ENCODE measurements at regions of chr18 and their contacts with region 1.

Region 1: GRCh38 chr18:32470713-32471633 is at the start of gene GAREM1:
- DNase-seq: peak; percentile 97
- H3K4me3 ChIP-seq: peak within 1 kb of the TSS; percentile 74 to 92 (median 88)
- H3K27ac ChIP-seq: peak within 1 kb of the TSS; percentile 85 to 95 (median 92)
- H3K4me1 ChIP-seq: peaks cover 14 to 43% (median 35%) of the 10 kb centered on the region in 4 donors
- H3K27me3 ChIP-seq: no peaks in the 10 kb centered on the region
- CTCF ChIP-seq: peak; percentile 86 to 91 (median 90)
- EP300 ChIP-seq: no peak
- POLR2A ChIP-seq: peak; percentile 62
- total RNA-seq, gene GAREM1: 7.0 to 11.6 (median 9.8) TPM

Region 2: DNA sequence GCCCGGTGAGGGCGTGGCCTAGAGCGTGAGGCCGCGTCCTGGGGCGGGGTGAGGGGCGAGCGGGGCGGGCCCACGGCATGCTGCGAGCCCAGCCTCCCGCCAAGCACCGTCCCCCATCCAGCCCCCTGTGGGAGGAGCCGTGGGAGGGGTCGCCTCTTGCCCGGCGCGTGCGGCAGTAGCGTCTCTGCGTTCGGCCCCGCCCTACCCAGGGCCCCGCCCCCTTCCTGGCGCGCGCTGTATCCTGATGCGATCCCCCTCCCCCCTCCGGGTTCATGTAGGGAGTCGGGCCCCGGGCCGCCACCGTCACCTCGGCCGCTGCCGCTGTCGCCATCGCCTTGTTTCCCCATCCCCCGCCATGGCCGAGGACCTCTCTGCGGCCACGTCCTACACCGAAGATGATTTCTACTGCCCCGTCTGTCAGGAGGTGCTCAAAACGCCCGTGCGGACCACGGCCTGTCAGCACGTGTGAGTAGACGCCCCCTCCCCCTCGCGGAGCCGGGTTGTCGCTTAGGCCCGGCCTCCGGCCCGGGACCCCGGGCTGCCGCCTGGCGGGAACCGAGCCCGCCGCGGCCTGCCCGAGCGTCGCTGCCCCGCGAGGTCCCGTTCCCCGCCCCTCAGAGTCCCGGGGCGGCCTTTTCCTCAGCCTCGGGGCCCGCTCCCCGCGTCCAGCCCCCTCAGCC is 378.4 kb before region 1 on chr18:
- intact Hi-C with region 1: loop called (anchors 10 kb)
- DNase-seq: peak; percentile 99
- H3K4me3 ChIP-seq: peak overlapping the region; percentile 75 to 93 (median 86)
- H3K27ac ChIP-seq: peak overlapping the region; percentile 99 to 100 (median 100)
- H3K4me1 ChIP-seq: peaks cover 27 to 49% (median 49%) of the 10 kb centered on the region in 4 donors
- H3K27me3 ChIP-seq: no peaks in the 10 kb centered on the region
- CTCF ChIP-seq: no peak
- EP300 ChIP-seq: no peak
- POLR2A ChIP-seq: peak; percentile 23

Region 3: GRCh38 chr18:32158108-32158624 is 312.8 kb before region 1 on chr18:
- intact Hi-C with region 1: loop called (anchors 2 kb)
- DNase-seq: peak; percentile 95
- H3K4me3 ChIP-seq: peak overlapping the region; percentile 27 to 50 (median 40)
- H3K27ac ChIP-seq: no peak overlapping the region
- H3K4me1 ChIP-seq: peaks cover 5 to 11% (median 8%) of the 10 kb centered on the region in 4 donors
- H3K27me3 ChIP-seq: no peaks in the 10 kb centered on the region
- CTCF ChIP-seq: peak; percentile 84 to 86 (median 85)
- EP300 ChIP-seq: no peak
- POLR2A ChIP-seq: no peak

Region 4: GRCh38 chr18:32271672-32272208 is 199.2 kb before region 1 on chr18:
- intact Hi-C with region 1: loop called (anchors 1 kb)
- DNase-seq: no peak
- H3K4me3 ChIP-seq: no peak overlapping the region
- H3K27ac ChIP-seq: no peak overlapping the region
- H3K4me1 ChIP-seq: peaks cover 0 to 8% (median 3%) of the 10 kb centered on the region in 4 donors
- H3K27me3 ChIP-seq: no peaks in the 10 kb centered on the region
- CTCF ChIP-seq: peak; percentile 69 to 70 (median 70)
- EP300 ChIP-seq: no peak
- POLR2A ChIP-seq: no peak

Region 5: DNA sequence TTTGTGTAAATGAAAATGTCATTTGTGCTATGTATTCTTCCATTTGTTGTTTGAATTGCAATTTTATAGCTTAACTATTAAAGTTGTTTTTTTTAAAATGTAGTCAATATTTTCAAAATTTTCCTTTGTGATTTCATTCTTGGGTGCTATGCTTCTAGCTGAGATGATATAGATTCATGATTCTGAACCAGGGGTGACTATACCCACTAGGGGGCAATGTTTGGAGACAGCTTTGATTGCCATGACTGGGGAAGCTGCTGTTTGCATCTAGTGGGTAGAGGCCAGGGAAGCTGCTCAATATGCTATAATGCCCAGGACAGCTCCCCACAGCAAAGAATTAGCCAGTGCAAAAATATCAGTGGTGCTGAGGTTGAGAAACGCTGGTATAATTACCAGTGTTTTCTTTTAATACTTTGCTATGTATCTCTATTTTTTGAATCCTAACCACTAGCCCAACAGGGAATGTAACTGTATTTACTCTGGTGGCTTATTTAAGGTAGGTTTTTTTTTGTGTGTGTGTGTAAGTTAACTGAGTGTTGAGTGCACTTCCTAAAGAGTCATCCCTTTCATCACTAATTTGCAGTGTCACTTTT is 181.4 kb before region 1 on chr18:
- intact Hi-C with region 1: loop called (anchors 2 kb)
- DNase-seq: no peak
- H3K4me3 ChIP-seq: no peak overlapping the region
- H3K27ac ChIP-seq: no peak overlapping the region
- H3K4me1 ChIP-seq: peaks cover 0 to 4% (median 0%) of the 10 kb centered on the region in 4 donors
- H3K27me3 ChIP-seq: no peaks in the 10 kb centered on the region
- CTCF ChIP-seq: peak; percentile 52 to 71 (median 62)
- EP300 ChIP-seq: no peak
- POLR2A ChIP-seq: no peak

Region 6: GRCh38 chr18:32389858-32390257 is 81.1 kb before region 1 on chr18:
- intact Hi-C with region 1: no loop called
- DNase-seq: no peak
- H3K4me3 ChIP-seq: no peak overlapping the region
- H3K27ac ChIP-seq: no peak overlapping the region
- H3K4me1 ChIP-seq: peaks cover 15 to 25% (median 22%) of the 10 kb centered on the region in 4 donors
- H3K27me3 ChIP-seq: no peaks in the 10 kb centered on the region
- CTCF ChIP-seq: no peak
- EP300 ChIP-seq: no peak
- POLR2A ChIP-seq: no peak

Region 7: DNA sequence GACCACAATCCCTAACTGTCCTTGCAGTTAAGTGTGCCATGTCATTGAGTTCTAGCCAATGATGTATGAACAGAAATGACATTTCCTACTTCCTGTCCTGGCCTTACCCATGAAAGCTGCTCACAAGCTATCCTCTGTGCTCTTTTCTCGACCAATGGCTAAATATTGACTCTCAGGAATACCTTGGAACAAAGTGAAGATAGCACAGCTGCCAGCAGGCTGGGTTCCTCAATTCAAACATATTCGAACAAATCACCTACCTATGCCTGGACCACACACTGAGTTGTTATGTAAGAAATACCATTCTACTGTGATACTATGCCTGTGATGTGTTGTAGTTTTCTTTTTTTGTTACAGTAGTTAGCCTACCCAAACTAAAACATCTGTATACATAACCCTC is 65.4 kb before region 1 on chr18:
- intact Hi-C with region 1: no loop called
- DNase-seq: no peak
- H3K4me3 ChIP-seq: no peak overlapping the region
- H3K27ac ChIP-seq: no peak overlapping the region
- H3K4me1 ChIP-seq: peaks cover 8 to 16% (median 14%) of the 10 kb centered on the region in 4 donors
- H3K27me3 ChIP-seq: no peaks in the 10 kb centered on the region
- CTCF ChIP-seq: no peak
- EP300 ChIP-seq: no peak
- POLR2A ChIP-seq: no peak

Region 8: GRCh38 chr18:32439802-32440201 is 31.2 kb before region 1 on chr18:
- intact Hi-C with region 1: no loop called
- DNase-seq: no peak
- H3K4me3 ChIP-seq: no peak overlapping the region
- H3K27ac ChIP-seq: no peak overlapping the region
- H3K4me1 ChIP-seq: peaks cover 14 to 43% (median 37%) of the 10 kb centered on the region in 4 donors
- H3K27me3 ChIP-seq: no peaks in the 10 kb centered on the region
- CTCF ChIP-seq: no peak
- EP300 ChIP-seq: no peak
- POLR2A ChIP-seq: no peak

Region 9: DNA sequence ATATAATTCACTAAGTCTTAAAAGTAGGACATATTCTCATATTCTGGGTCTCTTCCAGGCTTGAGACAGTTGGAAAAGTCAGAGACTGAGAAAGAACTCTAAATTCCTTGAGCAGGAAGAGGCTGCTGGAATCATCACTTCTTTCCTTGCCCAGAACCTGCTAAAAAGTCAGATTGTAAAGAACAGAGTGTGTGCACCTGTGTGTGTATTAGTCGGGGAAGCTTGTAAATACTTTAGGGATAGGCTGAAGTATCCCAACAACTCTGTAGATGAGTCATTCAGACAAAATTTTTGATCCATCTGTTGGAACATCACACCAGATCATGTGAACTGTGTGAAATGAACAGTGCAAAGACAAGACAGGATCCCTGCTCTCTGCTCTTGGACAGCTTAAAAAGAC is 16.4 kb before region 1 on chr18:
- intact Hi-C with region 1: loop called (anchors 2 kb)
- DNase-seq: no peak
- H3K4me3 ChIP-seq: no peak overlapping the region
- H3K27ac ChIP-seq: peak overlapping the region in 2 of 4 donors; percentile 5 to 11
- H3K4me1 ChIP-seq: peaks cover 12 to 32% (median 29%) of the 10 kb centered on the region in 4 donors
- H3K27me3 ChIP-seq: no peaks in the 10 kb centered on the region
- CTCF ChIP-seq: no peak
- EP300 ChIP-seq: no peak
- POLR2A ChIP-seq: no peak

Region 10: GRCh38 chr18:32552421-32553030 is 81.6 kb after region 1 on chr18:
- intact Hi-C with region 1: loop called (anchors 5 kb)
- DNase-seq: no peak
- H3K4me3 ChIP-seq: no peak overlapping the region
- H3K27ac ChIP-seq: no peak overlapping the region
- H3K4me1 ChIP-seq: no peaks in the 10 kb centered on the region
- H3K27me3 ChIP-seq: no peaks in the 10 kb centered on the region
- CTCF ChIP-seq: peak; percentile 65 to 80 (median 77)
- EP300 ChIP-seq: no peak
- POLR2A ChIP-seq: no peak